ENCODE measurements at regions of chr13 and their contacts with region 1.

Region 1: GRCh38 chr13:111153279-111153976 is 38.3 kb downstream of the ARHGEF7 start:
- DNase-seq: peak; percentile 88 to 96 (median 92)
- H3K4me3 ChIP-seq: peak overlapping the region; percentile 56 to 99 (median 90)
- H3K27ac ChIP-seq: peak overlapping the region; percentile 78 to 99 (median 96)
- H3K27me3 ChIP-seq: no peaks in the 10 kb centered on the region
- CTCF ChIP-seq: peak in 53 of 56 donors; percentile 4 to 72 (median 46)

Region 2: DNA sequence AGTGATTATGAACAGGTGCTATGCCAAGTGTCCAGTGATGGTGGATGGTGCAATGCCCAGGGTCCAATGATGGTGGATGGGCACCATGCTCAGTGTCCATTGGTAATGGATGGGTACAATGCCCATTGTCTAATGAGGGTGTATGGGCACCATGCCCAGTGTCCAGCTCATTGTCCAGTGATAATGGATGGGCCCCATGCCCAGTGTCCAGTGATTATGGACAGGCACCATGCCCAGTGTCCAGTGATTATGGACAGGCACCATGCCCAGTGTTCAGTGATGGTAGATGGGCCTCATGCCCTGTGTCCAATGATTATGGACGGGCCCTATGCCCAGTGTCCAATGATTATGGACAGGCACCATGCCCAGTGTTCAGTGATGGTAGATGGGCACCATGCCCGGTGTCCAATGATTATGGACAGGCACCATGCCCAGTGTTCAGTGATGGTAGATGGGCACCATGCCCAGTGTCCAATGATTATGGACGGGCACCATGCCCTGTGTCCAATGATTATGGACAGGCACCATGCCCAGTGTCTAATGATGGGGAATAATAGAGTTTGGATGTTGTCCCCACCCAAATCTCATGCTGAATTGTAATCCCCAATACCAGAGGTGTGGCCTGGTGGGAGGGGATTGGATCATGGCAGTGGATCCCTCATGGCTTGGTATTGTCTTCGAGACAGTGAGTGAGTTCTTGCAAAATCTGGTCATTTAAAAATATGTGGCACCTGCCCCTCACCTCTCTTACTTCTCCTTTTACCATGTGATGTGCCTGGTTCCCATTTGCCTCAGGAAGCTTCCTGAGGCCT is 326.4 kb before region 1 on chr13:
- intact Hi-C with region 1: no loop called
- DNase-seq: peak in 4 of 10 donors; percentile 14 to 69 (median 51)
- H3K4me3 ChIP-seq: no peak overlapping the region
- H3K27ac ChIP-seq: no peak overlapping the region
- H3K27me3 ChIP-seq: no peaks in the 10 kb centered on the region
- CTCF ChIP-seq: no peak

Region 3: GRCh38 chr13:111027458-111028439 is 125.7 kb before region 1 on chr13:
- intact Hi-C with region 1: no loop called
- DNase-seq: no peak
- H3K4me3 ChIP-seq: no peak overlapping the region
- H3K27ac ChIP-seq: no peak overlapping the region
- H3K27me3 ChIP-seq: peaks cover 0 to 6% (median 0%) of the 10 kb centered on the region in 45 donors
- CTCF ChIP-seq: no peak

Region 4: DNA sequence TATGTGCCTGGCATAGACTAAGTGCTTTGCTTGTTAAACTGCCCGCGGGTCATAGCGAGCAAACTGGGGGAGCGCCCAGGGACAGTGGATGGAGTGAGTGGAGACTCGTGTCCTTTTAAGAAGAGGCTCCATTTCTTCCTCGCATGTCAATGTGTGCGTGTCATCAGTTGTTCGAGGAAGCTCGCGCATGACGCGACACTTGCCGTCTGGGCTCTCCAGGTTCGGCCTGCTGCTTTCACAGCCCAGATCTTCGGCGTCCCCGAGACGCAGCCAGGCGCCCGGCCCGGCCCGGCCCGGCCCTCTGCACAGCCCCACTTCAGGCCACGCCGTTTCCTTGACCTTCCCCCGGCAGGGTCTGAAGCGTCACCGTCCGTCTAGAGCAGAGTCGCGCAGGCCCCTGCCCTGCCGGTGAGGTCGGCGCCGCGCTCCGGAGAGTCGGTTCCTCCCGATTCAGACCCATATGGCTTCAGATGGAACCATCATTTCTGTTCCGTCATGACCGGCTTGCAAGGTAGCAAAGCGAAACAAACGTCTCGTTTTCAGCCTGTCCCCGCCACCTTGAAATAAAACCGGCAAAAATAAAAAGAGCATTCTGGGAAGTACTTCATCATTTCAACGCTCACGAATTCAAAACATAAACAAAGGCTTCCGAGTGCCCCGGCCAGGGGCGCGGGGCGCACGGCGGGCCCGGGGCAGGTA is 38.9 kb before region 1 on chr13:
- intact Hi-C with region 1: no loop called
- DNase-seq: peak in 6 of 10 donors; percentile 19 to 65 (median 56)
- H3K4me3 ChIP-seq: peak overlapping the region; percentile 21 to 79 (median 65)
- H3K27ac ChIP-seq: peak overlapping the region in 58 of 59 donors; percentile 2 to 93 (median 82)
- H3K27me3 ChIP-seq: peaks cover 0 to 56% (median 0%) of the 10 kb centered on the region in 45 donors
- CTCF ChIP-seq: no peak

Region 5: DNA sequence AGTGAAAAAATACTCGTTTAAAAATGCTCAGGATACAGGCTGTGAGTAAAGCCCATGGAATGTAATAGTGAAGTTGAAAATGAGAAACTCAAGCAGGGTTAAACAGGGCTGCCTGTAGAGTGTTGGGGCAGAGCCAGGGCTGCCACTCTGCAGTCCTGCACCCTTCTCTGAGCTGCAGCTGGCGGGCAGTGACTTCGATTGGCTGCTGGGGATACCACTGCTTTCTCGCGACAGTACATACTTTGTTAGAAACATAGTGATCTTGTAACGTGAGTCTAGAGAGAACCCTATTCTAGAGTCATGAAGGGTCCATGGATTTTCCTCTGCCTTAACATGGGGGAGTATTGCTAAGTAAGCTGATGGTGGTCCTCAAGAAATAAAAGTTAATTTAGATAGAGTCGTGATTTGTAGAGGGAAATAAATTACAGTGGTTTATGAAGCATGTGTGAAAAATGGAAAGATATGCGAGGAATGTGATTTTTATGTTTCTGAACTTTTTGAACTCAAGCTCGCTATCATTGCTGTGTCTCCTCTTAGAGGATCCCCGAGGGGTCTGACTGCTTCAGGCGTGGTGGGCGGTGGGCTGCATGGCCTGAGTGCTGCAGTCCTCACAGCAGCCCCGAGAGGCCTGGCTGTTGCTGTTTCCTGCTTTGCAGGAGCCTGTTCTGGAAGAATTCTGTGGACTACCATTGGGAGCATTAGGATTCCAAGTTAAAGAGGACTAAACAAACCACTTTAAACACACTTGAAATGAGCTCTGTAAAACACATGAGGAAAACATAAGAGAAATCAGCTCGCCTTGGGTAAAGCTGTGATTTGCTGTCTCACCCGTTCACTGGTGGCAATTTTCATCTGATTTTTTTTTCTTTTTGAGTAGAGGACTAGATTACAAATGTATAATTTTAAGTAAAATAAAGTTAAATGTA is 57.4 kb after region 1 on chr13:
- intact Hi-C with region 1: loop called (anchors 2 kb)
- DNase-seq: peak in 9 of 10 donors; percentile 68 to 85 (median 80)
- H3K4me3 ChIP-seq: peak overlapping the region; percentile 11 to 81 (median 53)
- H3K27ac ChIP-seq: peak overlapping the region in 58 of 59 donors; percentile 23 to 94 (median 85)
- H3K27me3 ChIP-seq: no peaks in the 10 kb centered on the region
- CTCF ChIP-seq: peak in 5 of 56 donors; percentile 16 to 38 (median 22)

Region 6: DNA sequence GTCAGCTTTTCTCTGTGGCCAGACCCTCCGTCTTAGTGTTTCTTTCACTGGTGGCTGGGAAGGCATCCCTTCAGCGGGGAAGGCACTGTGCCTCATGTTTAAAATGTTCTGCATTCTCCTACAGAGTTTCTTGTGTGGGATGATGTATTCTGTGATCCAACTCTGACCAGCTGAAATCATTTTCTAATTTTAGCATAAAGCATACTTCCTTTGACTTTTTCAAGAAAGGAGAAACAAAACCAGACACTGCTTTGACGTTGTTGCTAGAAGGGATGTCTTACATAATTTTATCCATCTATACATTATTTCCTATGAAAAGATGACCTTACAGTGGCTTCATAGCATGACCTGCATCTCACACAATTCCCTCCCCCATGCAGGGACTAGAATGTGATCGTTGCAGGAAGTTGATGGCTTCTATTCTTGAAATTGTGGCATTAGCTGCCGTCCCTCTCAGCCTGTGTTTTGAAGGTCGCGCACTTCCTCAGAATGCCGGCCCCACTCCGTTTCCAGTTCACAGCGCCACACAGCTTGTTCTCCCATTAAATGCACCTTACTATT is 128.4 kb after region 1 on chr13:
- intact Hi-C with region 1: loop called in 1 of 2 experiments (anchors 10 kb)
- DNase-seq: no peak
- H3K4me3 ChIP-seq: peak overlapping the region in 1 of 59 donors; percentile 1
- H3K27ac ChIP-seq: peak overlapping the region in 58 of 59 donors; percentile 22 to 94 (median 83)
- H3K27me3 ChIP-seq: no peaks in the 10 kb centered on the region
- CTCF ChIP-seq: peak in 1 of 56 donors; percentile 13

Region 7: GRCh38 chr13:111584101-111584672 is 430.8 kb after region 1 on chr13:
- intact Hi-C with region 1: no loop called
- DNase-seq: peak in 2 of 10 donors; percentile 16 to 21
- H3K4me3 ChIP-seq: peak overlapping the region in 13 of 59 donors; percentile 2 to 38 (median 15)
- H3K27ac ChIP-seq: no peak overlapping the region
- H3K27me3 ChIP-seq: peaks cover 0 to 12% (median 0%) of the 10 kb centered on the region in 45 donors
- CTCF ChIP-seq: no peak

Measured in dorsolateral prefrontal cortex (tissue), 120 donors.